Calu3 (cell line): ENCODE measurements at regions of chr5 and their contacts with region 1.

Region 1: GRCh38 chr5:115377468-115378217 is 81.2 kb upstream of the CCDC112 start:
- DNase-seq: peak; percentile 30
- H3K4me3 Mint-ChIP-seq: peak overlapping the region; percentile 41
- H3K27ac Mint-ChIP-seq: peak overlapping the region; percentile 95
- H3K4me1 Mint-ChIP-seq: peaks cover 59% of the 10 kb centered on the region
- H3K27me3 Mint-ChIP-seq: no peaks in the 10 kb centered on the region
- CTCF ChIP-seq: no peak

Region 2: GRCh38 chr5:115467628-115468027 is 90.0 kb after region 1 on chr5:
- CTCF ChIA-PET with region 1: interaction called, 3 read pairs
- intact Hi-C with region 1: loop called (anchors 2 kb)
- DNase-seq: no peak
- H3K4me3 Mint-ChIP-seq: peak overlapping the region; percentile 46
- H3K27ac Mint-ChIP-seq: peak overlapping the region; percentile 90
- H3K4me1 Mint-ChIP-seq: peaks cover 51% of the 10 kb centered on the region
- H3K27me3 Mint-ChIP-seq: no peaks in the 10 kb centered on the region
- CTCF ChIP-seq: no peak

Region 3: GRCh38 chr5:115530426-115530825 is 152.8 kb after region 1 on chr5:
- CTCF ChIA-PET with region 1: no interaction called
- intact Hi-C with region 1: loop called (anchors 2 kb)
- DNase-seq: no peak
- H3K4me3 Mint-ChIP-seq: peak overlapping the region; percentile 69
- H3K27ac Mint-ChIP-seq: peak overlapping the region; percentile 85
- H3K4me1 Mint-ChIP-seq: peaks cover 75% of the 10 kb centered on the region
- H3K27me3 Mint-ChIP-seq: no peaks in the 10 kb centered on the region
- CTCF ChIP-seq: no peak

Region 4: GRCh38 chr5:115579747-115580173 is 202.1 kb after region 1 on chr5:
- CTCF ChIA-PET with region 1: interaction called, 51 read pairs
- intact Hi-C with region 1: loop called (anchors 1 kb)
- DNase-seq: no peak
- H3K4me3 Mint-ChIP-seq: no peak overlapping the region
- H3K27ac Mint-ChIP-seq: no peak overlapping the region
- H3K4me1 Mint-ChIP-seq: peaks cover 13% of the 10 kb centered on the region
- H3K27me3 Mint-ChIP-seq: no peaks in the 10 kb centered on the region
- CTCF ChIP-seq: no peak